Left ventricle myocardium inferior (tissue), 1 donor: ENCODE measurements at regions of chr14 and their contacts with region 1.

Region 1: DNA sequence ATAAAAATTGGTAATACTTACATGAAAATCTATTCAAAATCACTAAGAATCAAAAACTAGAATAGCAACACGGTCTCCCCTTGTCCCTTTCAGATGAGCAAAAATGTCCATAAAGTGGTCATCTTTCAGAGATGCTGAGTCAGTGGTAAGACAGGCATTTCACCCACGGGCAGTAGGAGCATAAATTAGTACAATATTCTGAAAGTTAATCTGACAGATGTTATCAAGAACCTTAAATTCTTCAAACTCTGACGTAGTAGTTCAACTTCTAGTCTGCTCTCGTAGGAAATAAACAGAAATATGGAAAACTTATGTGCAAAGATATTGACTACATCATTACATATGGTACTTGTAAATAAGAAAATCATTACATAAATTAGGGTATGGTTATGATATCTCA is 33.1 kb upstream of the GNPNAT1 start:
- DNase-seq: no peak
- H3K4me3 ChIP-seq: no peak overlapping the region
- H3K27ac ChIP-seq: no peak overlapping the region
- H3K4me1 ChIP-seq: peaks cover 11% of the 10 kb centered on the region
- H3K27me3 ChIP-seq: no peaks in the 10 kb centered on the region
- CTCF ChIP-seq: no peak

Region 2: GRCh38 chr14:52801015-52801712 is 23.3 kb before region 1 on chr14:
- intact Hi-C with region 1: no loop called
- DNase-seq: no peak
- H3K4me3 ChIP-seq: no peak overlapping the region
- H3K27ac ChIP-seq: peak overlapping the region; percentile 31
- H3K4me1 ChIP-seq: peaks cover 7% of the 10 kb centered on the region
- H3K27me3 ChIP-seq: no peaks in the 10 kb centered on the region
- CTCF ChIP-seq: no peak

Region 3: GRCh38 chr14:52961060-52961639 is 136.6 kb after region 1 on chr14:
- intact Hi-C with region 1: loop called (anchors 5 kb)
- DNase-seq: peak; percentile 29
- H3K4me3 ChIP-seq: no peak overlapping the region
- H3K27ac ChIP-seq: peak overlapping the region; percentile 70
- H3K4me1 ChIP-seq: peaks cover 22% of the 10 kb centered on the region
- H3K27me3 ChIP-seq: no peaks in the 10 kb centered on the region
- CTCF ChIP-seq: peak; percentile 78

Region 4: GRCh38 chr14:53055003-53055402 is 230.5 kb after region 1 on chr14:
- intact Hi-C with region 1: loop called (anchors 5 kb)
- DNase-seq: no peak
- H3K4me3 ChIP-seq: no peak overlapping the region
- H3K27ac ChIP-seq: no peak overlapping the region
- H3K4me1 ChIP-seq: peaks cover 7% of the 10 kb centered on the region
- H3K27me3 ChIP-seq: no peaks in the 10 kb centered on the region
- CTCF ChIP-seq: peak; percentile 86